ENCODE measurements at regions of chr21 and their contacts with region 1.

Region 1: DNA sequence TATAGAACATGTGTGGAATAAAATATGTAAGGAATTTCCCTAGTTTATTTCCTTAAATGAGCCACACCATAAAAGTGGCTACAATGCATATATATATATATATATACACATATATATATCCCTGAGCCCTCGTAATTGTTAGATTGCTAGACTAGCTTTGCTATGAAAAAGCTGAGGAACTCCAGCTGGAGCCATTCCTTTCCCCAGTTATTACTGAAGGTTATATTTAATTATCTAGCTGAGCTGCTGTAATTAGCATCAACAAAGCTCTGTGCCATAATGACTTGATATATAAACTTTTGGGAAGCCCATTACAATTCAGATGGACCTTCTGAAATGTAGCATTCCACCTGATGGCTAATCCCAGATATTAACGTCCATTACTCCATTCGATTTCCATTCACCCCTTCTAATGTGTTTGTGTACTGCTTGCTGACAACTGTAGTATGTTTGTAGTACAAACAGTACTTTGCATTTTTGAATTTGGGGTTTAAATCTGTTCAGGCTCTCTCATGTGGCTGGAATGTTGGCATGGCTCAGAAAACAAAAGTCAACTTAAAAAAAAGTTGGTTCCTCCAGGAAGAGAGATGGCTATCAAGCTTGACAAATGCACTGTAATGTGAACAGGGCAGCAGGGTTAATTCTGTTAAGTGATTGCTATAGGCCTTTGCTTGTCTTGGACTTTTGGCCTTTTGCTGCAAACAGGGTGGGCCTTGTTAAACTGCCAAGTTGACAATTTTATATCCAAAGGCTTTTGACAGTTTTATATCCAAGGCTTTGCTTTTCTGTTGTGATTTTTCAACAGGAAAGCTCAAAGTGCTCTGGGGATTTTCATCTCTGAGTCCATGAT is 170.0 kb downstream of the LTN1 start:
- DNase-seq: peak; percentile 21
- ATAC-seq: peak; percentile 68
- H3K4me3 ChIP-seq: no peak overlapping the region
- H3K27ac ChIP-seq: no peak overlapping the region
- H3K4me1 ChIP-seq: peaks cover 18% of the 10 kb centered on the region
- H3K27me3 ChIP-seq: no peaks in the 10 kb centered on the region
- CTCF ChIP-seq: no peak
- POLR2A ChIP-seq: no peak
- RAD21 ChIP-seq: no peak

Region 2: DNA sequence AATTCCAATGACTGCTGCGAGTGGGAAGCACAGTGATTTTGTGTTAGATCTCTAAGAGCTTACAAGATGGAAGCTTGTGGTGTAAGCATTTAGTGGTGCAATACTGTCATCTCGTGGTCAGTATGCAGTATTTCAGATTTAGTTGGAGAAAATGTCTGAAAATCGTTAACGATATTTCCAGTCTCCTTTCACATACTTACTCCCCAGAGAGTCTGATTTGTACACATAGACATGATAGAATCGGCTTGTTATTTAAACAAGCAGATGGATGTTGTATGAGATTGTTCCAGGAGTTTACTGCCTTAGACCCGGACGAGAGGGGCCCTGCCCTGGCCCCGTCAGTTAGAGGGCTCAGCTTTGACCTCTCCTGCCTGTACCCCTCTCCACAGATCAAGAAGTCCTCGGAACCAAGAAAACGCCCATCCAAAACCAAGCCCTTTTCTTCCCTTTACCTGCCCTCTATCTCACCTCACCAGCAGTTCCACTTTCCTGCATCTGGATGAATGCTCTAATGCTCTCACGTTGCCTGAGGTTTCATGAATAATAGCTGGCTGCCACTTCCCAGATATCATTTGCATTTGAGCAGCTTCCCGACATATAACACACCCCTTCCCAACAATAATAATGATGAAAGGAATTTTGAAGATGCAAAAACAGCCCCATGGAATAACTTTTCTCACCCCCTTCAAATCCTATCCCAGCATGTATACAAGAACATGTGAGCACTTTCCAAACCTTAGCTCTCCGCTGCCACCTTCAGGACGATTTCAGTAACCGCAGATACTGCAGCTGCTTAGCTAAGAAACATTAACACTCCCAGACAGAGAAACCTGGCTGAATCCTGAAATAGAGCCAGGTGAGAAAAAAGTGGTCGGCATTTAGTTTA is 77.3 kb before region 1 on chr21:
- CTCF ChIA-PET with region 1: no interaction called
- POLR2A ChIA-PET with region 1: no interaction called
- dilution Hi-C with region 1: no loop called
- in situ Hi-C with region 1: no loop called
- intact Hi-C with region 1: no loop called
- DNase-seq: peak; percentile 94
- ATAC-seq: peak; percentile 82
- H3K4me3 ChIP-seq: peak overlapping the region; percentile 38; the same call in 1 of the 2 replicates
- H3K27ac ChIP-seq: peak overlapping the region; percentile 93
- H3K4me1 ChIP-seq: peaks cover 6% of the 10 kb centered on the region
- H3K27me3 ChIP-seq: no peaks in the 10 kb centered on the region
- CTCF ChIP-seq: peak; percentile 99
- POLR2A ChIP-seq: peak; percentile 60
- RAD21 ChIP-seq: peak; percentile 100

Region 3: DNA sequence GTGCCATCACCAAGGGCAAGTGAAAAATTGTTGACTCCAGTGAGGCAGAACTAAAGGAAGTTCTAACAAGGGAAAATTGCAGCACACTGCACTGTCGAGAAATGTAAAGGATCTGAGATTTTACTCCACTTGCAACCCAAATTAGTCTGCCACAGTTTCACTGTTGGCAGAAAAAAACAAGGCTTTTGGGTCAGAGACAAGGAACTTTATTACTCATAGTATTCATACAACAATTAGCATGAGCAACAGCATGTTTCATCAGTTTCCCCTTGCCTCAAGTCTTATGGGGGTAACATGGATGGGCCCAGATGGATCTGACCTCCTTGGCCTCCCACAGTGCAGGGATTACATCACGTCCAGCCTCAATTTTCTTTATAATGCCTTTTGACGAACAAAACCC is 44.7 kb after region 1 on chr21:
- CTCF ChIA-PET with region 1: no interaction called
- POLR2A ChIA-PET with region 1: no interaction called
- dilution Hi-C with region 1: no loop called
- in situ Hi-C with region 1: no loop called
- intact Hi-C with region 1: loop called (anchors 5 kb)
- DNase-seq: peak; percentile 39
- ATAC-seq: no peak; the same call in 1 of the 2 replicates
- H3K4me3 ChIP-seq: no peak overlapping the region
- H3K27ac ChIP-seq: no peak overlapping the region
- H3K4me1 ChIP-seq: 0 out of 2 replicates have a peak, but pooled peaks cover 2% of the 10 kb centered on the region
- H3K27me3 ChIP-seq: no peaks in the 10 kb centered on the region
- CTCF ChIP-seq: no peak
- POLR2A ChIP-seq: no peak
- RAD21 ChIP-seq: no peak

Region 4: GRCh38 chr21:28884976-28885852 is 62.5 kb after region 1 on chr21:
- CTCF ChIA-PET with region 1: no interaction called
- POLR2A ChIA-PET with region 1: no interaction called
- dilution Hi-C with region 1: no loop called
- in situ Hi-C with region 1: no loop called
- intact Hi-C with region 1: loop called (anchors 5 kb)
- DNase-seq: peak; percentile 92
- ATAC-seq: peak; percentile 98
- H3K4me3 ChIP-seq: peak overlapping the region; percentile 72
- H3K27ac ChIP-seq: peak overlapping the region; percentile 92
- H3K4me1 ChIP-seq: 0 out of 2 replicates have a peak, but pooled peaks cover 2% of the 10 kb centered on the region
- H3K27me3 ChIP-seq: no peaks in the 10 kb centered on the region
- CTCF ChIP-seq: no peak
- POLR2A ChIP-seq: no peak; the same call in 1 of the 2 replicates
- RAD21 ChIP-seq: no peak